PC-9 (cell line): ENCODE measurements at regions of chr3 and their contacts with region 1.

Region 1: GRCh38 chr3:123258811-123259420 is 57.2 kb downstream of the SEC22A start:
- DNase-seq: peak in 1 of 2 experiments; percentile 57
- H3K4me3 ChIP-seq: no peak overlapping the region
- H3K27ac ChIP-seq: no peak overlapping the region
- H3K4me1 ChIP-seq: no peaks in the 10 kb centered on the region
- H3K27me3 ChIP-seq: no peaks in the 10 kb centered on the region
- CTCF ChIP-seq: peak; percentile 77

Region 2: GRCh38 chr3:122258757-122259371 is 1000.1 kb before region 1 on chr3:
- CTCF ChIA-PET with region 1: no interaction called
- POLR2A ChIA-PET with region 1: no interaction called
- intact Hi-C with region 1: loop called (anchors 5 kb)
- DNase-seq: peak; percentile 37 to 57
- H3K4me3 ChIP-seq: no peak overlapping the region
- H3K27ac ChIP-seq: no peak overlapping the region
- H3K4me1 ChIP-seq: no peaks in the 10 kb centered on the region
- H3K27me3 ChIP-seq: peaks cover 38% of the 10 kb centered on the region
- CTCF ChIP-seq: peak; percentile 65

Region 3: GRCh38 chr3:122392868-122393844 is 865.8 kb before region 1 on chr3:
- CTCF ChIA-PET with region 1: no interaction called
- POLR2A ChIA-PET with region 1: no interaction called
- intact Hi-C with region 1: loop called (anchors 2 kb)
- DNase-seq: peak in 1 of 2 experiments; percentile 9
- H3K4me3 ChIP-seq: no peak overlapping the region
- H3K27ac ChIP-seq: no peak overlapping the region
- H3K4me1 ChIP-seq: no peaks in the 10 kb centered on the region
- H3K27me3 ChIP-seq: no peaks in the 10 kb centered on the region
- CTCF ChIP-seq: peak; percentile 91

Region 4: DNA sequence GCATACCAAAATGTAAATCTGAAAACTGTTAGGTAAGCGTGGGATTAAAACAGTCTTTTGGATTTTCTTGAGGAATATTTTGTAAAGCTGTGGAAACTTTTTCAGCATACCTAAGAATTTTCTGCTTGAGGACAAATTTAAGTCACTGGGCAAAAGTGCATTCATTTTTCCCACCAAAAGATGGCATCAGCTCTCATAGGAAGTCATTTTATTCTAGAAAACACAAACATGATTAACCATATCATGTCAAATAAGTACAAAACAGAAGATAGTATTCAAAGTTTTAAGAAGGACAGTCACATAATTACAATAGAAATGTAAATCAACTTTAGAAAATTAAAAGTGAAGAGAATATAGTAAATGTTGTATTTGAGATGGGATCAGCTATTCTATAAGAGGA is 400.5 kb before region 1 on chr3:
- CTCF ChIA-PET with region 1: no interaction called
- POLR2A ChIA-PET with region 1: no interaction called
- intact Hi-C with region 1: loop called (anchors 5 kb)
- DNase-seq: no peak
- H3K4me3 ChIP-seq: no peak overlapping the region
- H3K27ac ChIP-seq: 0 out of 2 replicates have a peak overlapping the region, but pooled peaks have one; percentile 64
- H3K4me1 ChIP-seq: peaks cover 19% of the 10 kb centered on the region
- H3K27me3 ChIP-seq: no peaks in the 10 kb centered on the region
- CTCF ChIP-seq: peak; percentile 49; the same call in 1 of the 2 replicates

Region 5: DNA sequence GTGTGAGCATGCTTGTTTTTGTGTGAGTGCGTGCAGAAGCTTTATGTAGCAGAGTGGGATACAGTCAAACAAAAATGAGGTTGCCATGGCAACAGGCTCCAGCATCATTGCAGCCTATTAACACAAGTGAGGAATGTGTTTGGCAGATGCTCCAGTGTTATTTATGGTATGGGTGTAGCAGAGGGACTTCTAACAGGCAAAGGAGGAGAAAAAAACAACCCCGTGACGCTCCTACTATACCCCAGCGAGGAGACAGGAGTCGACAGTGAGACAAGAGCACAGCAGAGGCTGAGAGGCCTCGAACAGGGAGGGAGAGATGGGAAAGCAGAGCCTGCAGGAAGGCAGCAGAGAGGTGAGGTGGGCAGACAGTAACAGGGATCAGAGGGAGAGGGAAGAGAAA is 185.1 kb after region 1 on chr3:
- CTCF ChIA-PET with region 1: no interaction called
- POLR2A ChIA-PET with region 1: no interaction called
- intact Hi-C with region 1: no loop called
- DNase-seq: no peak
- H3K4me3 ChIP-seq: no peak overlapping the region
- H3K27ac ChIP-seq: no peak overlapping the region
- H3K4me1 ChIP-seq: no peaks in the 10 kb centered on the region
- H3K27me3 ChIP-seq: no peaks in the 10 kb centered on the region
- CTCF ChIP-seq: no peak